ENCODE measurements at regions of chr15 and their contacts with region 1.

Region 1: GRCh38 chr15:89760303-89761008 is 9.4 kb upstream of the MESP1 start:
- DNase-seq: peak; percentile 82 to 90 (median 87)
- ATAC-seq: peak; percentile 85
- H3K4me3 ChIP-seq: no peak overlapping the region
- H3K27ac ChIP-seq: peak overlapping the region; percentile 70 to 88 (median 80)
- H3K4me1 ChIP-seq: peaks cover 36% of the 10 kb centered on the region
- H3K27me3 ChIP-seq: no peaks in the 10 kb centered on the region
- CTCF ChIP-seq: peak; percentile 91 to 98 (median 96)
- POLR2A ChIP-seq: no peak

Region 2: DNA sequence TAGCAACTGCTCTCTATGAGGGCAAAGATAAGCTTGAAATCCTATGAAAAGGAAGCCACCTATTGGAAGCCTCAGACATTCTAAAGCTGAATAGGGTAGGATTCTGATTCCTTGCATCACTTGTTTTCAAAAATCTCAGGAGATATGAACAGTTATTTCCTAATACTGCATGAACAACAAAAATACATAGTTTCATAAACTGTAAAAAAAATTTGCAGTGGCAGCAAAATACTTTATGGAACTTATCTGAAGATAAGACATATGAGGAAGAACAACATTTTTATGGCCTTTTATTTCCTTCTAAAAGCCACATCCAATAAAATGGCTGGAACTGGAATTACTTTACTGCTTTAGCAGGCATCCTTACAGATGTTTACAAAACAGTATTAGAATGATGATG is 103.5 kb after region 1 on chr15:
- intact Hi-C with region 1: no loop called
- DNase-seq: no peak
- ATAC-seq: no peak
- H3K4me3 ChIP-seq: no peak overlapping the region
- H3K27ac ChIP-seq: peak overlapping the region in 3 of 4 donors; percentile 62 to 93 (median 72)
- H3K4me1 ChIP-seq: peaks cover 78% of the 10 kb centered on the region
- H3K27me3 ChIP-seq: no peaks in the 10 kb centered on the region
- CTCF ChIP-seq: no peak
- POLR2A ChIP-seq: no peak

Region 3: GRCh38 chr15:89874926-89875564 is 114.6 kb after region 1 on chr15:
- intact Hi-C with region 1: loop called (anchors 5 kb)
- DNase-seq: peak; percentile 87 to 93 (median 88)
- ATAC-seq: peak; percentile 88
- H3K4me3 ChIP-seq: no peak overlapping the region
- H3K27ac ChIP-seq: peak overlapping the region in 3 of 4 donors; percentile 6 to 54 (median 38)
- H3K4me1 ChIP-seq: peaks cover 45% of the 10 kb centered on the region
- H3K27me3 ChIP-seq: no peaks in the 10 kb centered on the region
- CTCF ChIP-seq: peak; percentile 79 to 94 (median 93)
- POLR2A ChIP-seq: no peak

Region 4: GRCh38 chr15:90165659-90166421 is 405.4 kb after region 1 on chr15:
- intact Hi-C with region 1: loop called (anchors 5 kb)
- DNase-seq: peak; percentile 50 to 94 (median 78)
- ATAC-seq: peak; percentile 60
- H3K4me3 ChIP-seq: no peak overlapping the region
- H3K27ac ChIP-seq: peak overlapping the region; percentile 45 to 82 (median 65)
- H3K4me1 ChIP-seq: peaks cover 25% of the 10 kb centered on the region
- H3K27me3 ChIP-seq: no peaks in the 10 kb centered on the region
- CTCF ChIP-seq: no peak
- POLR2A ChIP-seq: no peak

Measured in body of pancreas (tissue), 4 donors.